ENCODE measurements at regions of chr20 and their contacts with region 1.

Region 1: DNA sequence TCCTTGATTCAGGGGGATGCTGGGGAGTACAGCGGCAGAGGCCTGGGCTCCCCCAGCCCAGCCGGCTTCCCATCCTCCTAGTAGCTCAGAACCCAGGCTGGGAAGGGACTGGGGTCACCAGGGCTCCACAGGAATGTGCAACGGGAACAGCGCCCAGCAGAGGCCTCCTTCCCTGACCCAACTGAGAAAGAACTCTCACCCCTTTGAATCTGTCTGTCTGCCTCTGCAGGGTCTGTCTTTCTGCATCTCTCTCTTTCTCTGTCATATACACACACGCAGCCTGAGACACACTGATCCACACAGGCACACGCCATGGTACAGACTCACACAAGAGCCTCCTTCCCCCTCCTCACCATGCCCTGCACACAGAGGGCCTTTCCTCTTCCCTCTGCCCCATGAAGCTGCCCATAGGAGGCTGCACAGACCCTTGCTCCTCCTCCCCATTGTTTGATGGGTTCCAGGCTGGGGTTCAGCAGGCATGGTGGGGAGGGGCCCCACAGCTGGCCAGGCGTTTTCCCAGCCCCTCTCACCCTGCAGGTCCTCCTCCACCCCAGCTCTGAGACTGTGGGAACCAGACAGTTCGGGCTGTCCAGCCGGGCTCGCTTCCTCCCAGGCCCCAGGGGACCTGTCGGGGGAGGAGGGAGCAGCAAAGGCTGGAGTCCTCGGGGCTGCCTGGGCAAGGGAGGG is 2.8 kb downstream of the FOXS1 start:
- DNase-seq: no peak
- H3K4me3 ChIP-seq: peak overlapping the region; percentile 6; the same call in 1 of the 2 replicates
- CTCF ChIP-seq: no peak

Region 2: DNA sequence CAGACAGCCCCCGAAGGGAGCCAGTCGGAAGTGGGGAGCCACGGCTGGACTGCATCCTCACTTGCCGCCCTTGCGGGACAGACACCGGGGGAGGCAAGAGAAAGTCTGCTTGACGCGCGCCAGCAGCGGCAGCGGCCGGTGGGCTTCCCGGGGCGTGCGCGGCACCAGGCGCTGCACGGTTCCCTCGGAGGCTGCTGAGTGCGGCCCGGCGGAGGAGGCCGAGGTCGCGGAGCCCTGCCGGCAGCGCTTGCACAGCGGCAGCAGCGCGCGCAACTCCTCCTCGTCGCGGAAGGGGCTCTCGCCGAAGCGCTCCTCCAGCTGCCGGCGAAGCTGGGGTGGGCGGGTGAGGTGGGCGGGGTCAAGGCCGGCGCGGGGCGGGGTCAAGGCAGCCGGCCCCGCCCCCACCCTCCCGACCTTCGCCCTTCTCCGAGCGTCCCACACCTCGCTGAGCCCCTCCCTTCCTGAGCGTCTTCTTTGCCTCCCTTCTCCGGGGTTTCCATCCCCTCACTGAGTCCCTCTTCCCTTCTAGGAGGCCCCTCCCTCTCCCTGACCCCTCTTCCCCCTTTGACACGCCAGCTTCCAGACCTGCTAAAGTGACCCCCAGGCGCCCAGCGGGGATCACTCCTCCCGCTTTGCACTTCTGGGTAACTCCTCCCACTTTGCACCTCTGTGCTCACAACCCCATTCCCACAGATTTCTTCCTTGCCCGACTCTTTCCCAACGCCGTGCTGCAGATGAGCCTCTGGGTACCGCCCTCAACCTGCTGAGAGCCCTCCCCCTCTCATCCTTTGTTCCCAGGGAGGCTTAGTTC is 18.9 kb after region 1 on chr20:
- CTCF ChIA-PET with region 1: interaction called, 113 read pairs
- POLR2A ChIA-PET with region 1: no interaction called
- DNase-seq: no peak
- H3K4me3 ChIP-seq: peak overlapping the region; percentile 48
- CTCF ChIP-seq: no peak